ENCODE measurements at regions of chr5 and their contacts with region 1.

Region 1: GRCh38 chr5:140174465-140175366 is at the start of gene CYSTM1:
- DNase-seq: peak; percentile 95 to 98 (median 97)
- ATAC-seq: peak; percentile 94
- H3K4me3 ChIP-seq: peak within 1 kb of the TSS; percentile 97
- H3K4me3 Mint-ChIP-seq: peak within 1 kb of the TSS; percentile 84 to 95 (median 91)
- H3K27ac ChIP-seq: peak within 1 kb of the TSS; percentile 89
- H3K27ac Mint-ChIP-seq: peak within 1 kb of the TSS; percentile 78 to 98 (median 95)
- H3K4me1 ChIP-seq: peaks cover 8 to 14% of the 10 kb centered on the region in 2 donors
- H3K4me1 Mint-ChIP-seq: peaks cover 7 to 20% (median 14%) of the 10 kb centered on the region in 7 donors
- H3K27me3 ChIP-seq: no peaks in the 10 kb centered on the region
- H3K27me3 Mint-ChIP-seq: peaks cover 0 to 30% (median 0%) of the 10 kb centered on the region in 5 donors
- total RNA-seq, gene CYSTM1: 1.6 to 11.1 (median 3.5) TPM

Region 2: GRCh38 chr5:138331449-138332368 is 1843.0 kb before region 1 on chr5 and contains the start of gene CDC25C:
- CTCF ChIA-PET with region 1: no interaction called
- POLR2A ChIA-PET with region 1: no interaction called
- intact Hi-C with region 1: loop called in 1 of 2 experiments (anchors 10 kb)
- DNase-seq: peak; percentile 87 to 98 (median 96)
- ATAC-seq: peak; percentile 100
- H3K4me3 ChIP-seq: peak within 1 kb of the TSS; percentile 85
- H3K4me3 Mint-ChIP-seq: peak within 1 kb of the TSS; percentile 83 to 95 (median 86)
- H3K27ac ChIP-seq: peak within 1 kb of the TSS; percentile 49
- H3K27ac Mint-ChIP-seq: peak within 1 kb of the TSS; percentile 48 to 92 (median 68)
- H3K4me1 ChIP-seq: peaks cover 1 to 7% of the 10 kb centered on the region in 2 donors
- H3K4me1 Mint-ChIP-seq: peaks cover 7 to 35% (median 14%) of the 10 kb centered on the region in 7 donors
- H3K27me3 ChIP-seq: no peaks in the 10 kb centered on the region
- H3K27me3 Mint-ChIP-seq: no peaks in the 10 kb centered on the region
- total RNA-seq, gene CDC25C: 9.8 TPM in 1 of 5 experiments, not detected in the others

Region 3: GRCh38 chr5:139341650-139342422 is 832.9 kb before region 1 on chr5 and contains the start of gene PAIP2:
- CTCF ChIA-PET with region 1: no interaction called
- POLR2A ChIA-PET with region 1: no interaction called
- intact Hi-C with region 1: loop called in 1 of 2 experiments (anchors 5 kb)
- DNase-seq: peak; percentile 94 to 98 (median 97)
- ATAC-seq: peak; percentile 95
- H3K4me3 ChIP-seq: peak within 1 kb of the TSS; percentile 96
- H3K4me3 Mint-ChIP-seq: peak within 1 kb of the TSS; percentile 95 to 100 (median 98)
- H3K27ac ChIP-seq: peak within 1 kb of the TSS; percentile 98
- H3K27ac Mint-ChIP-seq: peak within 1 kb of the TSS; percentile 96 to 100 (median 99)
- H3K4me1 ChIP-seq: peaks cover 28 to 30% of the 10 kb centered on the region in 2 donors
- H3K4me1 Mint-ChIP-seq: peaks cover 34 to 65% (median 55%) of the 10 kb centered on the region in 7 donors
- H3K27me3 ChIP-seq: no peaks in the 10 kb centered on the region
- H3K27me3 Mint-ChIP-seq: peaks cover 0 to 5% (median 0%) of the 10 kb centered on the region in 5 donors
- total RNA-seq, gene PAIP2: 88.8 to 121 (median 106) TPM

Region 4: GRCh38 chr5:140157032-140157803 is 17.5 kb before region 1 on chr5:
- CTCF ChIA-PET with region 1: no interaction called
- POLR2A ChIA-PET with region 1: no interaction called
- intact Hi-C with region 1: loop called (anchors 1 kb)
- DNase-seq: peak; percentile 72 to 85 (median 82)
- ATAC-seq: peak; percentile 99
- H3K4me3 ChIP-seq: no peak overlapping the region
- H3K4me3 Mint-ChIP-seq: peak overlapping the region in 9 of 10 donors; percentile 7 to 66 (median 62)
- H3K27ac ChIP-seq: no peak overlapping the region
- H3K27ac Mint-ChIP-seq: peak overlapping the region in 4 of 9 donors; percentile 5 to 51 (median 32)
- H3K4me1 ChIP-seq: peaks cover 0 to 5% of the 10 kb centered on the region in 2 donors
- H3K4me1 Mint-ChIP-seq: peaks cover 3 to 12% (median 8%) of the 10 kb centered on the region in 7 donors
- H3K27me3 ChIP-seq: no peaks in the 10 kb centered on the region
- H3K27me3 Mint-ChIP-seq: peaks cover 0 to under 1% (median 0%) of the 10 kb centered on the region in 5 donors

Region 5: GRCh38 chr5:140220032-140220697 is 45.4 kb after region 1 on chr5:
- CTCF ChIA-PET with region 1: no interaction called
- POLR2A ChIA-PET with region 1: no interaction called
- intact Hi-C with region 1: no loop called
- DNase-seq: no peak
- ATAC-seq: no peak
- H3K4me3 ChIP-seq: no peak overlapping the region
- H3K4me3 Mint-ChIP-seq: no peak overlapping the region
- H3K27ac ChIP-seq: no peak overlapping the region
- H3K27ac Mint-ChIP-seq: peak overlapping the region in 1 of 9 donors; percentile 11
- H3K4me1 ChIP-seq: no peaks in the 10 kb centered on the region
- H3K4me1 Mint-ChIP-seq: peaks cover 0 to 25% (median 0%) of the 10 kb centered on the region in 7 donors
- H3K27me3 ChIP-seq: no peaks in the 10 kb centered on the region
- H3K27me3 Mint-ChIP-seq: no peaks in the 10 kb centered on the region

Region 6: GRCh38 chr5:140346348-140347101 is 171.8 kb after region 1 on chr5 and contains the start of gene HBEGF:
- CTCF ChIA-PET with region 1: no interaction called
- POLR2A ChIA-PET with region 1: no interaction called
- intact Hi-C with region 1: loop called in 1 of 2 experiments (anchors 1 kb)
- DNase-seq: peak; percentile 19 to 74 (median 42)
- ATAC-seq: peak; percentile 73
- H3K4me3 ChIP-seq: peak within 1 kb of the TSS; percentile 49
- H3K4me3 Mint-ChIP-seq: peak within 1 kb of the TSS; percentile 73 to 91 (median 84)
- H3K27ac ChIP-seq: peak within 1 kb of the TSS; percentile 57
- H3K27ac Mint-ChIP-seq: peak within 1 kb of the TSS in 8 of 9 donors; percentile 33 to 94 (median 62)
- H3K4me1 ChIP-seq: peaks cover 10 to 40% of the 10 kb centered on the region in 2 donors
- H3K4me1 Mint-ChIP-seq: peaks cover 33 to 68% (median 52%) of the 10 kb centered on the region in 7 donors
- H3K27me3 ChIP-seq: no peaks in the 10 kb centered on the region
- H3K27me3 Mint-ChIP-seq: peaks cover 0 to 17% (median 5%) of the 10 kb centered on the region in 5 donors
- total RNA-seq, gene HBEGF: 0.35 to 95.5 (median 11.6) TPM

Region 7: GRCh38 chr5:140547508-140548299 is 373.0 kb after region 1 on chr5 and contains the start of gene EIF4EBP3:
- CTCF ChIA-PET with region 1: no interaction called
- POLR2A ChIA-PET with region 1: no interaction called
- intact Hi-C with region 1: loop called in 1 of 2 experiments (anchors 5 kb)
- DNase-seq: peak; percentile 76 to 90 (median 88)
- ATAC-seq: peak; percentile 98
- H3K4me3 ChIP-seq: peak within 1 kb of the TSS; percentile 83
- H3K4me3 Mint-ChIP-seq: peak within 1 kb of the TSS; percentile 85 to 99 (median 92)
- H3K27ac ChIP-seq: peak within 1 kb of the TSS; percentile 89
- H3K27ac Mint-ChIP-seq: peak within 1 kb of the TSS; percentile 93 to 99 (median 98)
- H3K4me1 ChIP-seq: peaks cover 12 to 20% of the 10 kb centered on the region in 2 donors
- H3K4me1 Mint-ChIP-seq: peaks cover 22 to 49% (median 37%) of the 10 kb centered on the region in 7 donors
- H3K27me3 ChIP-seq: no peaks in the 10 kb centered on the region
- H3K27me3 Mint-ChIP-seq: no peaks in the 10 kb centered on the region
- total RNA-seq, gene EIF4EBP3: 12.5 to 19.5 (median 16.2) TPM

Region 8: DNA sequence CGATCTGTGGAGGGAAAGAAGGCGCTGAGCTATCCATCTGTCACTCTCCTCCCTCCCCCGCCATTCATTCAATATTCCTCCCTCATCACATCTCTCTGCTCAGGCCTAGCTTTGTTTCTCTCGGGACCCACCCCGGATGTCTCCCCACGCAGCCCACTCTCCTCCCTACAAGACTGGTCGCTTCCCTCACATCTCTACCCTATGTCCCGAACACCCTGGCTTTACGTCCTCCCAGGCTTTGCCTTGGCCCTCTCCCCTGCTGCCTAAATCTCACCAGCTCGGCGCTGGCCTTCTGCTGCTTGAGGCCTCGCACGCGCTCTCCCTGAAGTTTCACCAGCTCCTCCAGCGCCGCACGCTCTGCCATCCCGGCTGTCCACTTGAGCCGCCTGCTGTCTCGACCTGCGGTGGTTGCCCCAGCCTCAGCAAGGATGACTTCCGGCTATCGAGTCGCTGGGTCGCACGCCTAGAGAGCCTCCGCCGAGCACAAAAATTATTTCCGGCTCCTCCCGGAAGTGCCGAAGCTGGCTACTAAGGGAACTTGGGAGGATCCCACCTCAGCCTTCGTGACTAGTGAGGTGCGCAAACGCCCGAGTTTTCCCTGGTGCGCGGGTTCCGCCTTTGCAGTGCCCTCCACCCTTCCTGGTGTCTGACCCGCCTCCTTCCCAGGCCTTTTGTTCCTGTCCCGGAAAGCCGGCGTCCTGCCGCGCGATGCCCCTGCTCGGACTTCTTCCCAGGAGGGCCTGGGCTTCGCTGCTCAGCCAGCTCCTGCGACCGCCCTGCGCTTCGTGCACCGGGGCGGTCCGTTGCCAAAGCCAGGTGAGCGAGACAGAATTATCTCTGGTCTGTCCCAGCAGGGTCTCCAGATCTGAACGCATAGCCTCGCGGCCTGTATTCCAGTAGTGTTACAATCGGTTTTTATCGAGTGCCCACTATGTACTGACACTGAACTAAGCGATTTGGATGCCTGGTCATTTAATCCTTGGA is 516.5 kb after region 1 on chr5 and contains the starts of genes HARS1 and HARS2:
- CTCF ChIA-PET with region 1: no interaction called
- POLR2A ChIA-PET with region 1: no interaction called
- intact Hi-C with region 1: loop called in 1 of 2 experiments (anchors 5 kb)
- DNase-seq: peak; percentile 55 to 83 (median 71)
- ATAC-seq: peak; percentile 97
- H3K4me3 ChIP-seq: peak within 1 kb of the TSS; percentile 91
- H3K4me3 Mint-ChIP-seq: peak within 1 kb of the TSS; percentile 92 to 100 (median 99)
- H3K27ac ChIP-seq: peak within 1 kb of the TSS; percentile 89
- H3K27ac Mint-ChIP-seq: peak within 1 kb of the TSS; percentile 91 to 99 (median 98)
- H3K4me1 ChIP-seq: peaks cover 16 to 22% of the 10 kb centered on the region in 2 donors
- H3K4me1 Mint-ChIP-seq: peaks cover 29 to 60% (median 53%) of the 10 kb centered on the region in 7 donors
- H3K27me3 ChIP-seq: no peaks in the 10 kb centered on the region
- H3K27me3 Mint-ChIP-seq: no peaks in the 10 kb centered on the region
- total RNA-seq, gene HARS1: 48.7 to 85.7 (median 68.5) TPM
- total RNA-seq, gene HARS2: 25.4 to 59.6 (median 38.8) TPM